ENCODE measurements at regions of chr19 and their contacts with region 1.

Region 1: DNA sequence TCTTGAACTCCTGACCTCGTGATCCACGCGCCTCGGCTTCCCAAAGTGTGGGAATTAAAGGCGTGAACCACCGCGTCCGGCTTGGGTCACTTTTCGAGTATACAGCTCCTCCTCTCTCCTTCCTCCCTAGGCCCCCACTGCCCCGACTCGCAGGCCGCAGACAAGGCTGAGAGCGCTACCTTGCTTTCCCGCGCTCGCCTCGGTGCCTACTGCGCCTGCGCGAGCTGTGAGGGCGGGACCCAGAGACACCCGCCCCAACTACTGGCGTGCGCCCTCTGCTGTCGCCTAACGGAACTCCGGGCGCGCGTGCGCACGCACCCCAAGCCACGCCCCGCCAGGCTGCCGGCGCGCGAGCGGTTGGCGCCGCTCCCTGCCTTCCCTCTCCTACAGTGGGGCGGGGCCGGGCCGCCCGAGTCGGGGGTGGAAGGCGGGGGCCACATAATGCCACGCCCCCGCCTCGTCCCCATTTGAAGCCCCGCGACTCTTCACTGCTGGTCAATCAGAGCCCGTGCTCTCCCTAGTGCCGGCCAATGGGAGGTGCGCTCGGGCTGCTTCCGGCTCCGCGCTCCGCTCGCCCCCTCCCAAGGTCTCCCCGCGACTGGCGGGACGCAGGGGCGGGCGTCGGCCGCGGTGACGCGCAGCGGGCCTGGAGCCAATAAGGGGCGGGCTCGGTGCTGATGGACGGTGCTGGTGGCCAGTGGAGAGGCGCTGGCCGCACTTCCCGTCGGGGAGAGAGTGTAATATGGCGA is at the start of gene RAB8A:
- DNase-seq: peak; percentile 98
- H3K4me3 ChIP-seq: peak within 1 kb of the TSS; percentile 78
- H3K27ac ChIP-seq: peak within 1 kb of the TSS; percentile 81
- H3K4me1 ChIP-seq: peaks cover 12% of the 10 kb centered on the region
- H3K27me3 ChIP-seq: no peaks in the 10 kb centered on the region
- CTCF ChIP-seq: peak; percentile 91
- total RNA-seq, gene RAB8A: 127 to 145 TPM

Region 2: DNA sequence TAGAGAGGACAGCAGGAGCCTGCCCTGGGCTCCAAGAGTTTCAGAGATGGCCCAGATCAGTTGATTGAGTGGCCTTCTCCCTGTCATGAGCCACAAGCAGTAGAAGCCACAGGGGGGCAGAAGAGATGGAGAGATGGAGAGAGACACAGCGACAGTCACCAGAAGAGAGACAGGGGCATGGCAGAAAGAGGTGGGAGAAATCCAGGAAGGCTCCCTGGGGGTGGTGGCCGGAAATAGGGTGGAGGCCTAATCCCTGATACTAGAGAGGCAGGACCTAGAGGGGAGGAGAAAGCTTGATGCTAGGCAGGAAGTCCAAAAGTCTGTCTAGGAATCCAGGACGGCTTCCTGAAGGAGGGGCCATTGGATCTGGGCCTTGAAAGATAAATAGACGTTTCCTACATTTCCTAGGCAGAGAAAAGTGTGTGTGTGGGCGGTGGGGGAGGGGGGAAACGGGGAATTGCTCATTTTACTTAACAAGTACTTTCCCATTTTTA is 44.7 kb before region 1 on chr19:
- intact Hi-C with region 1: loop called (anchors 5 kb)
- DNase-seq: peak; percentile 81
- H3K4me3 ChIP-seq: no peak overlapping the region
- H3K27ac ChIP-seq: peak overlapping the region; percentile 78
- H3K4me1 ChIP-seq: peaks cover 12% of the 10 kb centered on the region
- H3K27me3 ChIP-seq: no peaks in the 10 kb centered on the region
- CTCF ChIP-seq: peak; percentile 15

Region 3: DNA sequence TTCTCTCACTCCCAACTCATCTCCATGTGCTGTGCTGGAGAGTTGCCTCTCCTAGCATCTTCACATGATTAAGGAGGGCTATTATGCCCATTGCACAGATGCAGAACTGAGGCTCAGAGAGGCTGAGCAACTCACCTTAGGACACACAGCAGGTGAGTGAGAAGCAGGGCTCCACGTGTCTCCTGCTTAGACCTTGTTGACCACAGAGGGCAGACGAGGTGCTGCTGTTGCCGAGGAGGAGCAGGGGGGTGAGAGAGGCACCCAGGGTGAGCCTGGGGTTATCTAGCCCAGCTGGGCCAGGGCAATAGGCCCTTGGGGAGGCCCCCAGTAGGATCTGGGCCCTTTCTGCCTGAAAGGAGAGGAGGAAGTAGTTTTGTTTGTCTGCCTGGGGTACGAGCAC is 29.7 kb after region 1 on chr19:
- intact Hi-C with region 1: no loop called
- DNase-seq: no peak
- H3K4me3 ChIP-seq: no peak overlapping the region
- H3K27ac ChIP-seq: no peak overlapping the region
- H3K4me1 ChIP-seq: no peaks in the 10 kb centered on the region
- H3K27me3 ChIP-seq: no peaks in the 10 kb centered on the region
- CTCF ChIP-seq: no peak